ENCODE measurements at regions of chr3 and their contacts with region 1.

Region 1: DNA sequence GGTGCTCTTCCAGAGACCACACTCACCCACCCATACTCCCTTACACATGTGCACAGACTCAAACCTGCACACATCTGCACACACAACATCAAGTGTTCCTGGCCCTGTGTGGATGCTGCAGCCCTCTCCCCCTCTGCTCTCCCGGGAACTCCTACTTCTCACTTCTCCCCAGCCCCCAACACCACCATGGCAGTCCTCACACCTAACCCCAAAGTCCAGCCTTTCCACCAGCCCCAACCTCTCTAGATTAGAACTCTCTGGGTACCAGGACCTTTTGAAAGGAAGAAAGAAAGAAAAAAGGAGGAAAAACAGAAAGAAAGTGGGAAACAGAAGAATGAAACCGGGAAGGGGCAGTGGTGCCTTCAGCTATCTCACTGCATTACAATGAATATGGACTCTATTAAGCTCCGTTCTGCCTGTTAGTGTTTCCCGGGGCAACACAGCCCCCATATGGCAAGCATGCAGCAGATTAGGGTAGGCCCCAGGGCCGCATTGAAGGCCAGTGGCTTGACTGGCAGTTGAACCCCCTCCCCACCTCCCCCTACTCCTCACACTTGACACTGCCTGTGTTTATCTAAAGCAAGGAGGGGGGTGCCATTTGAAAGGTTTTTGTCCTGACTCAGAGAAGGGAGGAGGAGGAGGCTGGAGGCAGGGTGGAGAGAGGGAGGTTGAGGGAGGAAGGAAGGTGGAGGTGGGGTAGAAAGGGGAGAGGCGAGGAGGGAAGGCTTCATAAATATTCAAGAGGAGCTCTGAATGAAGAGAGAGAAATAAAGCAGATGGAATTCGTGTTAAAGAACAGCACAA is 30.1 kb downstream of the BOC start:
- DNase-seq: peak in 1 of 2 experiments; percentile 58
- H3K4me3 ChIP-seq: peak overlapping the region in 1 of 4 experiments; percentile 32; a peak in 1 of 8 replicates
- H3K27ac ChIP-seq: peak overlapping the region; percentile 49; the same call in 1 of the 2 replicates
- H3K4me1 ChIP-seq: peaks cover 7 to 30% (median 15%) of the 10 kb centered on the region in 4 experiments
- H3K27me3 ChIP-seq: no peaks in the 10 kb centered on the region
- CTCF ChIP-seq: no peak
- EP300 ChIP-seq: peak in 1 of 2 experiments; percentile 30; a peak in 1 of 3 replicates
- POLR2A ChIP-seq: no peak; a peak in 1 of 3 replicates
- RAD21 ChIP-seq: peak; percentile 27; a peak in 2 of 4 replicates

Region 2: DNA sequence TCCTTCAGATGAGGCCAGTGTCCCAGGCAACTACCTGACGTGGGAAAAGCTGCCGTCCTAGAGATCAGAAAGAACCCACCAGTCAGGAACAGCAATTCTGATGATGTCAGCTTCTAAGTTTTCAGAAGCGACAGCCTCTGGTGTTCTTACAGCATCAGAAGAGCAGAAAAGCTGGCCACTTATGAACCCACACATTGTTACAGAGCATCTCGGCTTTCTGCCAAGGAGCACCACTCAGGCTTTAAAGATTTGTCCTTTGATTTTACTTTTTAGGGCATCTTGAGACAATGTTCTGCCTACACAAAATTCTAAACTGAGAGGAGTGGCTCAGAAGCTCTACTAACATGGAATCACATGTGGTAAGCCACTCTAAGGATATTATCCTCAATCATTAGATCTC is 79.8 kb before region 1 on chr3:
- CTCF ChIA-PET with region 1: no interaction called
- POLR2A ChIA-PET with region 1: no interaction called
- DNase-seq: no peak
- H3K4me3 ChIP-seq: no peak overlapping the region
- H3K27ac ChIP-seq: no peak overlapping the region
- H3K4me1 ChIP-seq: peaks cover 0 to 7% (median 5%) of the 10 kb centered on the region in 4 experiments; a peak in 4 of 7 replicates
- H3K27me3 ChIP-seq: no peaks in the 10 kb centered on the region
- CTCF ChIP-seq: no peak
- EP300 ChIP-seq: no peak
- POLR2A ChIP-seq: no peak
- RAD21 ChIP-seq: no peak

Region 3: GRCh38 chr3:113228498-113229286 is 12.8 kb before region 1 on chr3:
- CTCF ChIA-PET with region 1: interaction called, 15 read pairs
- POLR2A ChIA-PET with region 1: no interaction called
- DNase-seq: no peak
- H3K4me3 ChIP-seq: no peak overlapping the region
- H3K27ac ChIP-seq: no peak overlapping the region
- H3K4me1 ChIP-seq: peaks cover 3 to 13% (median 11%) of the 10 kb centered on the region in 4 experiments
- H3K27me3 ChIP-seq: no peaks in the 10 kb centered on the region
- CTCF ChIP-seq: no peak
- EP300 ChIP-seq: no peak
- POLR2A ChIP-seq: no peak
- RAD21 ChIP-seq: no peak

Measured in H1 (cell line).